HEK293T (cell line): ENCODE measurements at regions of chr15 and their contacts with region 1.

Region 1: GRCh38 chr15:25508369-25509002 is 69.7 kb upstream of the UBE3A start:
- DNase-seq: peak; percentile 8

Region 2: DNA sequence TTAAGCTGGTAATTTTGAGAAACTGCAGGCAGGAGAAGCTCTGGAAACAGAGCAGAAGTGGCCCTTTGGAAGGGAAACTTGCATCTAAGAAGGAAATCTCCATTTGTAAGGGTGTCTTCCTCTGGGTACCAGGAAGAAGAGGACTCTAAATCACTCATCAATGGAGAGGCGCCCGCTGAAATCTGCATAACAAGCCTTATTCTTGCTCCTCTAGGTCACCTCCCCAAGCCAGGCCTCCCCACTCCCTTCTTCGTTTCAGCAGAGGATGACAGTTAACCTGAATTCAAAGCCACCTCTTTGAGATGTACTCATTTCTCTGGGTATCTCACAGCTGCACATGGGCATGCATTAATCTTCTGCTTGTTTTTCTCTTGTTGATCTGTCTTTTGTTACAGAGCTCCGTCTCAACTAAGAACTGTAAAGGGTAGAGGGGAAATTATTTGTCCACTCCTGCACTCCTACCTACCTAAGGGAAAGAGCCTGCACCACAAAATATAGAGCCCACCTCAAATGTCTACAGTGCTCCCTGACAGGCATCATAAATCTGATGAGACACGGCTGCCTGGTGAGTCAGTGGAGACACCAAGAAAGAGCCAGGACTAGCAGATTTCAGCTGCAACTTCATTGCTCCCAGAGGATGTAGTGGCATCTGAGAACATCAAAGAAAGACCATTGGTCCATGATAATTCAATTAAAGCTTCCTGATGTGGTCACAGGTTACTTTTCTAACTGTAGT is 1212.9 kb after region 1 on chr15:
- CTCF ChIA-PET with region 1: interaction called, 12 read pairs
- POLR2A ChIA-PET with region 1: no interaction called
- DNase-seq: no peak